Activated B cell treated with CpG ODN at 0.5 μM for 24 hours (primary cell): ENCODE measurements at regions of chr14 and their contacts with region 1.

Region 1: GRCh38 chr14:55051426-55052268 is at the start of gene MAPK1IP1L:
- DNase-seq: peak; percentile 97
- ATAC-seq: peak; percentile 94
- H3K4me3 Mint-ChIP-seq: peak within 1 kb of the TSS; percentile 94
- H3K27ac Mint-ChIP-seq: peak within 1 kb of the TSS; percentile 95
- H3K4me1 Mint-ChIP-seq: peaks cover 39% of the 10 kb centered on the region
- H3K27me3 Mint-ChIP-seq: no peaks in the 10 kb centered on the region
- CTCF ChIP-seq: peak; percentile 75
- total RNA-seq, gene MAPK1IP1L: 119 and 130 TPM in 2 replicates

Region 2: GRCh38 chr14:55026793-55027561 is 24.7 kb before region 1 on chr14 and contains the starts of genes SOCS4 and WDHD1:
- CTCF ChIA-PET with region 1: interaction called, 9 read pairs
- POLR2A ChIA-PET with region 1: interaction called, 42 read pairs
- intact Hi-C with region 1: loop called (anchors 1 kb)
- DNase-seq: peak; percentile 99
- ATAC-seq: peak; percentile 92
- H3K4me3 Mint-ChIP-seq: peak within 1 kb of the TSS; percentile 95
- H3K27ac Mint-ChIP-seq: peak within 1 kb of the TSS; percentile 92
- H3K4me1 Mint-ChIP-seq: peaks cover 50% of the 10 kb centered on the region
- H3K27me3 Mint-ChIP-seq: no peaks in the 10 kb centered on the region
- CTCF ChIP-seq: no peak
- total RNA-seq, gene SOCS4: 29.2 and 30.3 TPM in 2 replicates
- total RNA-seq, gene WDHD1: 9.3 and 9.5 TPM in 2 replicates

Region 3: DNA sequence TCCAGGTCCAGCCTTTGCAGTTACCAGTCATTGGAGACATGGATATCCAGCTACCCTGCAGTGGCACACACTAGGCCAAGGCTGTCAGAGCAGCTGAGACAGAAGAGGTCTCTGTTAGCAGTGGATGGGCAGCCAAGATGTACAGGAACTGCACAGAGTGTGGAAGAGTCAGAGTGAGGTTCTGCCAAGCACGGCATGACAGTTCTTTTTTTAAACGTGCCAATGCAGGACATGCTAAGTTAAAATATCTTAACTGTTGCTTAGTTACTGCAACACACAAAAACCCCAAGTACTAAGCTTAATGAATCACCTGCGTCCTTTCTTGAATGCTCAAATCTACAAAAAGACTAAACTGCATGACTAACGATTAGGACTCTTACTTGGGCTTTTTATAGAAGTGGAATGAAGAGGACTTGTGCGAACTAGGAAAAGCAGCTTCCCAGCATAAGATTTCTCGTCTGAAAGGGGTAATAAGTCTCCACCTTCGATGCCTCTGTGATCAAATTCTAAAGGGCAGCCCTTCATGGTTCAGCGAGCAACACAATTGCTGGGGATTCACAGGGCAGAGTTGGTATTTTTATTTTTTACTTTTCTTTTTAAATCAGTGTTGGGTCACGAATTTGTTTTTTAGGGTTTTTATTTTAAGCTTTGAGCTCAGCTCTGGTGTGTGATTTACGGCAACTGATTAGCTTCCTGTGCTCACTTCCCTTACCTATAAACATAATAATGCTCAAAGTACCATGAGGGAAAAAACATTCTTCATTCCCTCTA is 20.4 kb after region 1 on chr14:
- CTCF ChIA-PET with region 1: interaction called, 35 read pairs
- POLR2A ChIA-PET with region 1: interaction called, 112 read pairs
- intact Hi-C with region 1: loop called (anchors 1 kb)
- DNase-seq: peak; percentile 47
- ATAC-seq: peak; percentile 77
- H3K4me3 Mint-ChIP-seq: peak overlapping the region; percentile 79
- H3K27ac Mint-ChIP-seq: peak overlapping the region; percentile 98
- H3K4me1 Mint-ChIP-seq: peaks cover 75% of the 10 kb centered on the region
- H3K27me3 Mint-ChIP-seq: no peaks in the 10 kb centered on the region
- CTCF ChIP-seq: no peak

Region 4: GRCh38 chr14:55094321-55095157 is 42.9 kb after region 1 on chr14:
- CTCF ChIA-PET with region 1: interaction called, 16 read pairs
- POLR2A ChIA-PET with region 1: interaction called, 13 read pairs
- intact Hi-C with region 1: loop called (anchors 1 kb)
- DNase-seq: no peak
- ATAC-seq: no peak
- H3K4me3 Mint-ChIP-seq: no peak overlapping the region
- H3K27ac Mint-ChIP-seq: no peak overlapping the region
- H3K4me1 Mint-ChIP-seq: peaks cover 28% of the 10 kb centered on the region
- H3K27me3 Mint-ChIP-seq: no peaks in the 10 kb centered on the region
- CTCF ChIP-seq: no peak

Region 5: DNA sequence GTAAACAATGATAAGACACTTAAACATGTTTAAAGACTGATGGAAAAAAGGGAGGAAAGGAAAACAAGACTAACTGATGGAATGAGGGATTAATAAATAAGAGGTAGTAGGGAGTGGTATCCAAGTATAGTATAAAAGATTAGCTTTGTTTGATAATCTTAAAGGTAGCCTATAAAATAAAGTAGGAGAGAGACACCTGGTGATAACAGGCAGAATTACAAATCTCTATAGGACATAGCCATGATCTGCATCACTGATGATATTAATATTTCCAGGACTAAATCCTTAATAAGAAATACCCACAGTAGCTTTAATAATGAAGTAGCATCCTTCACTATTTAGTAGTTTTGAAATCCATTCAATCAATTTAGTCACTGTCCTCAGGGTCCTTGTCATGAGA is 109.3 kb after region 1 on chr14:
- CTCF ChIA-PET with region 1: interaction called, 41 read pairs
- POLR2A ChIA-PET with region 1: interaction called, 29 read pairs
- intact Hi-C with region 1: loop called (anchors 1 kb)
- DNase-seq: no peak
- ATAC-seq: peak; percentile 75
- H3K4me3 Mint-ChIP-seq: no peak overlapping the region
- H3K27ac Mint-ChIP-seq: no peak overlapping the region
- H3K4me1 Mint-ChIP-seq: peaks cover 2% of the 10 kb centered on the region
- H3K27me3 Mint-ChIP-seq: no peaks in the 10 kb centered on the region
- CTCF ChIP-seq: no peak

Region 6: GRCh38 chr14:56730538-56731145 is 1679.0 kb after region 1 on chr14:
- CTCF ChIA-PET with region 1: no interaction called
- POLR2A ChIA-PET with region 1: no interaction called
- intact Hi-C with region 1: no loop called
- DNase-seq: no peak
- ATAC-seq: no peak
- H3K4me3 Mint-ChIP-seq: no peak overlapping the region
- H3K27ac Mint-ChIP-seq: no peak overlapping the region
- H3K4me1 Mint-ChIP-seq: no peaks in the 10 kb centered on the region
- H3K27me3 Mint-ChIP-seq: peaks cover 28% of the 10 kb centered on the region
- CTCF ChIP-seq: no peak